Esophagus squamous epithelium (tissue), 5 donors: ENCODE measurements at regions of chr1 and their contacts with region 1.

Region 1: DNA sequence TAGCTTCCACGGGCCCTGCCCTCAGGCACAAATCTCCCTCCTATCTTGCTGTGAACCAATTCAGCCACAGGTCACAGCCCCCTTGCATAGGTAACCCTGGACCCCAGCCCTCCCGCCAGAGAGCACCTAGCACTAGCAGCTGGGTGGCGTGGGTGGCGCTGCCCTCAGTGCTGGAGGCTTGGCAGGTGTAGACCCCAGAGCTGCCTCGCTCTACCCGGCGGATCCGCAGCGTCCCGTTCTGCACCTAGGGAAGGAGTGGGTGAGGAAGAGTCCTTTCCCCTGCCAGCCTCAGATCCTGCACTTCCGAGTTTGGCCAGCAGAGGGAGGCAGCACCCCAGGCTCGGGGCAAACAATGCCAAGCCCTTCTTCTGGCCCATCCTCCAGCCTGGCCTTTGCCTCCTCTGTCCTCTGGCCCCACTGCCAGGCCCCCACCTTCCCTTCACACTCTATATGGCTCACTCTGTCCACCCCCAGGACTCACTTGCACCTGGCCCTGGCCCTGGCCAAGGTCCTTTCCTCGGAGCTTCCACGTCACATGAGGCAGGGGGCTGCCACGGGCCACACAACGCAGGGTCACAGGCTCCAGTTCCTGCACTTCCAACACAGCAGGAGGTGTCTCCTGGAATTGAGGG is 9.0 kb downstream of the IGSF9 start:
- DNase-seq: no peak
- H3K4me3 ChIP-seq: no peak overlapping the region
- H3K27ac ChIP-seq: peak overlapping the region in 2 of 4 donors; percentile 0 to 18
- H3K4me1 ChIP-seq: peaks cover 35 to 86% (median 38%) of the 10 kb centered on the region in 3 donors
- H3K27me3 ChIP-seq: peaks cover 0 to 12% (median 0%) of the 10 kb centered on the region in 4 donors
- CTCF ChIP-seq: peak; percentile 97 to 100 (median 98)
- POLR2A ChIP-seq: no peak

Region 2: DNA sequence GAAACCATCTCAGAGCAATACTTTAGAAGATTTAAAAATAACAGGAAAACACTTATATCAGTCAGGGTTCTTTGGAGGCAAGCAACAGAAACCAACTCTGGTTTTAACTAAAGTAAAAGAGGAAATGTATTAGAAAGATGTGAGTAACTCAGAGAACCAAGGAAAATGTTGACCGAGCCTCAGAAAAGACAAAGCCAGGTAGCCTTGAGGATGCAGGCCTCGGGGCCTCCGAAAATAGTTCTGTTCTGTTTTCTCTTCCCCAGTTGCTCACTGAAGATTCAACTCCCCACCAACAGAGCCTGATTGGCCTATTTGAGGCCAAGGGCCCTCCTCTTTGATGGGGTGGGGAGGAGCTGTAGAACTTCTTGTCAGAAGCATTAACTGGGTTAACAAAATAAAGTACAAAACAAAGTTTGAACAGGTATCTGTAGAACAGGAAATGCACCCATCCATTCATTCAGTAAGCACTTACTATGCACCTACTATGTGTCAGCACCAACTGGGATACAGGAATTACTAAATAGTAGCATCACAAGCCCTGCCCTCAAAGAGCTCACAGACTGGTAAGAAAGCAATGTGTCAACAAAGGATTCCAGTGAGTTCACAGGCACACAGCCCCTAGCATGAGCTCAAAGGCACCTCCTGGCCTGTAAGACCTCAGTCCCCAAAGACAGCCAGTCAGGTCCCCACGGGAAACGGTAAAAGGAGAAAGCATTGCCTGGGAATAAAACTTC is 97.1 kb before region 1 on chr1:
- intact Hi-C with region 1: no loop called
- DNase-seq: no peak
- H3K4me3 ChIP-seq: no peak overlapping the region
- H3K27ac ChIP-seq: no peak overlapping the region
- H3K4me1 ChIP-seq: peaks cover 0 to 11% (median 0%) of the 10 kb centered on the region in 3 donors
- H3K27me3 ChIP-seq: no peaks in the 10 kb centered on the region
- CTCF ChIP-seq: no peak
- POLR2A ChIP-seq: no peak

Region 3: GRCh38 chr1:160006312-160006940 is 70.0 kb after region 1 on chr1:
- intact Hi-C with region 1: loop called (anchors 2 kb)
- DNase-seq: no peak
- H3K4me3 ChIP-seq: no peak overlapping the region
- H3K27ac ChIP-seq: no peak overlapping the region
- H3K4me1 ChIP-seq: peaks cover 0 to 4% (median 0%) of the 10 kb centered on the region in 3 donors
- H3K27me3 ChIP-seq: no peaks in the 10 kb centered on the region
- CTCF ChIP-seq: peak; percentile 66 to 93 (median 84)
- POLR2A ChIP-seq: no peak

Region 4: DNA sequence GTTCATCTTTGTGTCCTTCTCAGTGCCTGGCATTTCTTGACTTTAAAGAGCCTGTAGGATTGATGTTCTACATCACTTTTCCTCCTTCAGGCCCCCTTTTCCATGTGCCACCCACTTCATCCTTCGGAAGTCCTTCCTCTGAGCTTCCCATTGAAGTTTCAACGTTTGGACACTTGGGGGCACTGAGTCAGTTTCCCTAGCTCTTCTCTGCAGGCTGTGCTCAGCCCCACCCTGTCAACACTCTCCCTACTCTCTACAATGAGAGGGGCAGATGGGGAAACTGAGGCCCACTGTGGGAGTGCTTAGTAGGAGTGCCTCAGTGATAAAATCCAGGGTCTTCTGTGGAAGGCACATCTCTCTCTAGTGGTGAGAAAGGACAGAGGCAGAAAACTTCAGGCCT is 121.7 kb after region 1 on chr1:
- intact Hi-C with region 1: no loop called
- DNase-seq: no peak
- H3K4me3 ChIP-seq: no peak overlapping the region
- H3K27ac ChIP-seq: no peak overlapping the region
- H3K4me1 ChIP-seq: peaks cover 0 to 6% (median 0%) of the 10 kb centered on the region in 3 donors
- H3K27me3 ChIP-seq: peaks cover 0 to 66% (median 0%) of the 10 kb centered on the region in 4 donors
- CTCF ChIP-seq: peak in 1 of 6 experiments; percentile 9
- POLR2A ChIP-seq: no peak

Region 5: GRCh38 chr1:160085686-160086455 is 149.5 kb after region 1 on chr1:
- intact Hi-C with region 1: loop called (anchors 10 kb)
- DNase-seq: no peak
- H3K4me3 ChIP-seq: no peak overlapping the region
- H3K27ac ChIP-seq: no peak overlapping the region
- H3K4me1 ChIP-seq: peaks cover 0 to 11% (median 9%) of the 10 kb centered on the region in 3 donors
- H3K27me3 ChIP-seq: peaks cover 2 to 36% (median 5%) of the 10 kb centered on the region in 4 donors
- CTCF ChIP-seq: peak; percentile 56 to 80 (median 66)
- POLR2A ChIP-seq: no peak